A673 (cell line): ENCODE measurements at regions of chr9 and their contacts with region 1.

Region 1: DNA sequence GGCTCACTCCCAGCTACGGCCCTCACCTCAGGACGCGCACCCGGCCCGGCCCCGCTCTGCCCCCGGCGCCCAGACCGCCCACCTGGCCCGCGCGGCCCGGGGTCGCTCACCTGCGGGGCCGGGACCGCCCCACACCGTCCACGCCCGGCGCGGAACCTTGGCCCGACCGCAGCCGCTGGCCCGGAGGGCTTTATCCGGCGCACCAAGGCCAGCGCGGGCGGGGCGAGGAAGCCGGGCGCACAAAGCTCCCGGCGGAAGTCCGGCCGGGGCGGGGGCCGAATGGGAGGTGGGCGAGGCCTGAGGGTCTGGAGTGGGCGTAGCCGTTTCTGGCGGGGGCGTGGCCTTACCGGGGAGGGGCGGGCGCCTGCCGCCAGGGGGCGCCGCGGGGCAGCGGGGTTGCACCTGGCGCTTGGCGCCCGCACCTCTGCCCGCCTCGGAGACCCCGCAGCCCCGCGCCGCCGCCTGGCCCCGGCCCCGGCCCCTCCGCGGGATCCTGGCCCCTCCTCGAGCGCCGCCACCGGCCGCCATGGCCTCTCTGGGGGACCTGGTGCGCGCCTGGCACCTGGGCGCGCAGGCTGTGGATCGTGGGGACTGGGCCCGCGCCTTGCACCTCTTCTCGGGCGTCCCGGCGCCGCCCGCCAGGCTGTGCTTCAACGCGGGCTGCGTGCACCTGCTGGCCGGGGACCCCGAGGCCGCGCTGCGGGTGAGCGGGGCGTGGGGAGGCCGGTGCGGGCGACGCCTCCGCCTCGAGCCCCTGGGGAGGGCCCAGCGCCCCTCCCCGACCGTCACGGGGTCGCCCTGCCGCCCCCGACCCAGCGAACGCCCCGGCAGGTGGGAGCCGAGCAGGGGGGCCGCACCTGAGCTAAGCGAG is at the starts of genes EXD3 and NOXA1:
- DNase-seq: peak; percentile 95
- H3K4me3 ChIP-seq: peak within 1 kb of the TSS; percentile 97
- H3K27ac ChIP-seq: peak within 1 kb of the TSS; percentile 72
- H3K4me1 ChIP-seq: no peaks in the 10 kb centered on the region
- H3K27me3 ChIP-seq: no peaks in the 10 kb centered on the region
- CTCF ChIP-seq: peak; percentile 62
- total RNA-seq, gene EXD3: 6.3 and 9.4 TPM in 2 replicates
- total RNA-seq, gene NOXA1: 0.28 and 0.79 TPM in 2 replicates

Region 2: DNA sequence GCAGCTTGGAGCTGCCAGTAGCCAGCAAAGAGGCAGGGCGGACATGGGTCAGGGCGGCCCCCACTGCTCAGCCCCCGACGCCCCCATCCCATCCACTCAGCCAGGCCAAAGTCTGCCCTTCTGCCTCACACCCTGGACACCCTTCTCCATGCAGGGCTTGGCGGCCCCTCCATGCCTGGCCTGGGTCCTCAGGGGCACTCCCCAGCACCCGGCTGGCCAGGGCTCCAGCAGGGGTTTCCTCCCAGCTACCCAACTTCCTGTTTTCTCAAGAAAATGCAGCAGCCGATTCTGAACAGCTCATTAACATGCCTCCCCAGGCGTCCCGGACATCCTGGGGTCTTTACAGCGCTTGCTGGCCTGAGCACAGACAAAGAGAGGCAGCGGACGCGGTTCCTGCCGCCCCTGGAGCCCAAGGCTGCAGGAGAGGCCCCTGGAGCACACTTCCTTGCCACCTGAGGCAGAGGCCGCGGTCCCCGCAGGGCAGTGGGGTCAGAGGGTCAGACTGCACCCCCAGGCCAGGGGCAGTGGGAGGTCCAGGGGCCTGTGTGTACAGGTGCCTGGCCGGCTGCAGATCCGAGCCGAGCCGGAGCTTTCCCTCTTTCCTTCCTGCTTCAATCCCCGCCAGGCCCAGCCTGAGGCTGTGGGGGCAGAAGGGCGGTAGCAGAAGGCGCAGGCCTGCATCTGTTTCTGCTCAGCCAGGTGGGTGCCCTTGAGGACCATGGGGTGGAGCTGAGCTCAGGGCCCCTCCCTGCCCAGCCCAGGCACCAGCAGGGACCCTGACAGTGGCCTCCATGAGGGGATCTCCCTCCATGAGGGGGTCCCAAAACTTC is 102.5 kb before region 1 on chr9:
- CTCF ChIA-PET with region 1: interaction called, 15 read pairs
- POLR2A ChIA-PET with region 1: no interaction called
- intact Hi-C with region 1: no loop called
- DNase-seq: peak; percentile 58
- H3K4me3 ChIP-seq: no peak overlapping the region
- H3K27ac ChIP-seq: no peak overlapping the region
- H3K4me1 ChIP-seq: peaks cover 16% of the 10 kb centered on the region
- H3K27me3 ChIP-seq: no peaks in the 10 kb centered on the region
- CTCF ChIP-seq: no peak

Region 3: DNA sequence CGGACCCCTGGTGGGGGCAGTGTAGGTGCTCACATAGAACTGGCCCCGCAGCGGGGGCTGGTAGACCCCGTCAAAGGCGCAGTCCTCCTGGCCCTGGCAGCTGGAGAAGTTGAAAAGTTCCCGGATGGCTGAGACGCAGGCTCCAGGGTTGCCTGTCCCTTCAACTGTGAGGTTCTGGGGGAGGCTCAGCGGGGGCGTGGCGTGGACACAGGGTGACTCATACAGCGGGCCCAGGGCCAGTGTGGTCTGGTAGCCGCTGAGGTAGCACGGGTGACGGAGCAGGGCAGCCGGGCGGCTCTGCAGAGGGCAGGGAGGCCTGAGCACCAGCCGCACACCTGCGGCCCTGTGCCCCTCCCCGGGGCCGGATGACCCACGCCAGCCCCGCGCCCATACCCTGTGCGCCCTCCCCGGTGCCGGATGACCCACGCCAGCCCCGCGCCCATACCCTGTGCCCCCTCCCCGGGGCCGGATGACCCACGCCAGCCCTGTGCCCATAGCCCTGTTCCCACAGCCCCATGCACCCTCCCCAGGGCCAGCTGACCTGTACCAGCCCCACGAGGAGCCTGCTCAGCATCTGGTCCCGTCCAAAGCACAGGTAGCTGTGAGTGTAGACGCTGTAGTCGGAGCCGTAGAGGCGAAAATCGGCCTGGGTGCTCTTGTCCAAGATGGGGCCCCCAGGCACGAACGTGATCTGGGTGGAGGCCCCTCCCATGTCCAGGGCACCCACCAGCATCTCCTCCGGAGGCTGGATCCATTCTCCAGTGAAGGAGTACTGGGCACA is 12.9 kb after region 1 on chr9:
- CTCF ChIA-PET with region 1: interaction called, 13 read pairs
- POLR2A ChIA-PET with region 1: no interaction called
- intact Hi-C with region 1: no loop called
- DNase-seq: no peak
- H3K4me3 ChIP-seq: no peak overlapping the region
- H3K27ac ChIP-seq: no peak overlapping the region
- H3K4me1 ChIP-seq: no peaks in the 10 kb centered on the region
- H3K27me3 ChIP-seq: no peaks in the 10 kb centered on the region
- CTCF ChIP-seq: no peak

Region 4: GRCh38 chr9:137445275-137445807 is 22.1 kb after region 1 on chr9:
- CTCF ChIA-PET with region 1: interaction called, 11 read pairs
- POLR2A ChIA-PET with region 1: no interaction called
- intact Hi-C with region 1: no loop called
- DNase-seq: peak; percentile 79
- H3K4me3 ChIP-seq: no peak overlapping the region
- H3K27ac ChIP-seq: no peak overlapping the region
- H3K4me1 ChIP-seq: peaks cover 6% of the 10 kb centered on the region
- H3K27me3 ChIP-seq: no peaks in the 10 kb centered on the region
- CTCF ChIP-seq: peak; percentile 91

Region 5: GRCh38 chr9:137804908-137805630 is 381.8 kb after region 1 on chr9:
- CTCF ChIA-PET with region 1: no interaction called
- POLR2A ChIA-PET with region 1: no interaction called
- intact Hi-C with region 1: no loop called
- DNase-seq: no peak
- H3K4me3 ChIP-seq: no peak overlapping the region
- H3K27ac ChIP-seq: no peak overlapping the region
- H3K4me1 ChIP-seq: no peaks in the 10 kb centered on the region
- H3K27me3 ChIP-seq: no peaks in the 10 kb centered on the region
- CTCF ChIP-seq: no peak